ENCODE measurements at regions of chrX and their contacts with region 1.

Region 1: GRCh38 chrX:104136241-104137019 is 20.4 kb downstream of the SLC25A53 start:
- DNase-seq: peak; percentile 65
- H3K4me3 ChIP-seq: peak overlapping the region in 2 of 3 experiments; percentile 37 to 40
- H3K27ac ChIP-seq: no peak overlapping the region
- H3K4me1 ChIP-seq: no peaks in the 10 kb centered on the region
- H3K27me3 ChIP-seq: no peaks in the 10 kb centered on the region
- CTCF ChIP-seq: peak; percentile 79

Region 2: DNA sequence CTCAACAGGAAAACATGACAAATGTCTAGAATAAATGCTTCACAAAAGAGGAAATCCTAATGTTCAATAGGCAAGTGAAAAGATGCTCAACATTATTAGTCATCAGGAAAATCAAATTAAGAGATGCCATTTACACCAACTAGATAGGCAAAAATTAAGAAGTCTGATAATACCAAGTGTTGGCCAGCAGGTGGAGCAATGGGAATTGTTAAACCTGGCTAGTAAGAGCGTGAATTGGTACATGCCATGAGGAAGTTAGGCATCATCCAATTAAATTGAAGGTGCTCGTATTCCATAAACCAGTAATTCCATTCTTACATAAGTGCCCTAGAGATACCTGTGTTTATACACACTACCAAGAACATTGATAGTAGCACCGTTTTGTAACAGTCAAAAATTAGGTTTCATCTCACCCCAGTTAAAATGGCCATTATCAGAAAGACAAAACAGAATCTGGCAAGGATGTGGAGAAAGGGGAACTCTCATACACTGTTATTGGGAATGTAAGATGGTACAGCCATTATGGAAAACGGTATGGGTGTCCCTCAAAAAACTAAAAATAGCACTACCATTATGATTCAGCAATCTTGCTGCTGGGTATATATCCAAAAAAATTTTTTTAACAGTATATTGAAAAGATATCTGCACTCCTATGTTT is 38.1 kb before region 1 on chrX:
- CTCF ChIA-PET with region 1: no interaction called
- dilution Hi-C with region 1: no loop called
- in situ Hi-C with region 1: no loop called
- intact Hi-C with region 1: loop called (anchors 1 kb)
- DNase-seq: peak; percentile 73
- H3K4me3 ChIP-seq: no peak overlapping the region
- H3K27ac ChIP-seq: no peak overlapping the region
- H3K4me1 ChIP-seq: no peaks in the 10 kb centered on the region
- H3K27me3 ChIP-seq: peaks cover 7% of the 10 kb centered on the region
- CTCF ChIP-seq: peak; percentile 62 to 71

Region 3: DNA sequence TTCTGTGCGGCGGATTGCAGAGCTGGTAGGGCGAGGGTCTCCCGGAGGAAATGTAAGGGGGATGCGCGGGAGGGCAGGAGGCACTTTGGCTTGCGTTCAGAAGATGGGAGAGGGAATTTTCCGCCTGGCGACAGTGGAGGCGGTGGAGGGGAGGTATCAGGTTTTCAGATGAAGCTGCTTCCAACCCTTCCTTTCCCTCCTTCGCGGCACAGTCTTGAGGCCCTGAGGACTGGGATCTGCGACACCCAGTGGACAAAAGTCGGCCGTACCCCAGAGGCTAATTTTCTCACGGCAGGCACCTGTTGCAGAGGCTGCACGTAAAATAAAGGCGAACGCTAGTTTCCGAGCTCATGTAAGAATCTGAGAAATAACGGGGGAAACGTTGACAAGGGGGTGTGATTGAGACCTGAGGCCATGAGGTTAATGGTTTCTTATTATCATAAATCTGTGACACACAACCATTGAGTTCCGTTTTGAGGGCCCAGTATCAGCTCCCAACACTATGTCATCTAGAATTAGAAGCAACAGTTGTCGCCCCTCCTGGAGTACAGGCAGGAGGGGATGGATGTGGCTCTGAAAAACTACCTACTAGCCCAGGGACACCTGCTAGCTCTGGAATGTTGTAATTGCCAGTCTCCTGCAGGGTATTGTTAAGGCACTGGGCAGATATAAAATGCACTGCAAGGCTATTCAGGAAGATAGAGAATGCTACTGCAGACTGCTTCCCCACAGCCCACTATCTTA is 23.0 kb before region 1 on chrX:
- CTCF ChIA-PET with region 1: no interaction called
- dilution Hi-C with region 1: no loop called
- in situ Hi-C with region 1: no loop called
- intact Hi-C with region 1: loop called (anchors 1 kb)
- DNase-seq: peak; percentile 53
- H3K4me3 ChIP-seq: peak overlapping the region; percentile 30 to 67 (median 63)
- H3K27ac ChIP-seq: no peak overlapping the region
- H3K4me1 ChIP-seq: no peaks in the 10 kb centered on the region
- H3K27me3 ChIP-seq: no peaks in the 10 kb centered on the region
- CTCF ChIP-seq: peak; percentile 42 to 61

Region 4: DNA sequence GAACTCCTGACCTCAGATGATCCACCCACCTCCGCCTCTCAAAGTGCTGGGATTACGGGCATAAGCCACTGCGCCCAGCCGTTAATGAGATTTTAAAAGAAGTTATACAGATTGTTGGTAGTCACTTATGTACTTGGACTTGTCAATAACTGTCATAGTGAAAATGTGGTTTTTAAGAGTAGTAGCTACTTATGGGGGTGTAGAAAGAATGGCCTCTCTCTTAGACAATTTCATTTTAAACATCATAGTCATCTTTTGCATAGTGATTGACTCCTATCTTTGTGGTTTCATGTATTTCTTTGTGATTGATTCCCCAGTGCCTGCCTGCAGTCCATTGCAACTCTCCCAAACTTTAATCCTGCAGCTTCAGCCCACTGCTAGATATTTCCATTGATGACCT is 47.3 kb after region 1 on chrX:
- CTCF ChIA-PET with region 1: no interaction called
- dilution Hi-C with region 1: no loop called
- in situ Hi-C with region 1: no loop called
- intact Hi-C with region 1: no loop called
- DNase-seq: no peak
- H3K4me3 ChIP-seq: no peak overlapping the region
- H3K27ac ChIP-seq: no peak overlapping the region
- H3K4me1 ChIP-seq: no peaks in the 10 kb centered on the region
- H3K27me3 ChIP-seq: no peaks in the 10 kb centered on the region
- CTCF ChIP-seq: no peak

Measured in mammary epithelial cell (primary cell).